CD4-positive, alpha-beta memory T cell (primary cell): ENCODE measurements at regions of chr20 and their contacts with region 1.

Region 1: DNA sequence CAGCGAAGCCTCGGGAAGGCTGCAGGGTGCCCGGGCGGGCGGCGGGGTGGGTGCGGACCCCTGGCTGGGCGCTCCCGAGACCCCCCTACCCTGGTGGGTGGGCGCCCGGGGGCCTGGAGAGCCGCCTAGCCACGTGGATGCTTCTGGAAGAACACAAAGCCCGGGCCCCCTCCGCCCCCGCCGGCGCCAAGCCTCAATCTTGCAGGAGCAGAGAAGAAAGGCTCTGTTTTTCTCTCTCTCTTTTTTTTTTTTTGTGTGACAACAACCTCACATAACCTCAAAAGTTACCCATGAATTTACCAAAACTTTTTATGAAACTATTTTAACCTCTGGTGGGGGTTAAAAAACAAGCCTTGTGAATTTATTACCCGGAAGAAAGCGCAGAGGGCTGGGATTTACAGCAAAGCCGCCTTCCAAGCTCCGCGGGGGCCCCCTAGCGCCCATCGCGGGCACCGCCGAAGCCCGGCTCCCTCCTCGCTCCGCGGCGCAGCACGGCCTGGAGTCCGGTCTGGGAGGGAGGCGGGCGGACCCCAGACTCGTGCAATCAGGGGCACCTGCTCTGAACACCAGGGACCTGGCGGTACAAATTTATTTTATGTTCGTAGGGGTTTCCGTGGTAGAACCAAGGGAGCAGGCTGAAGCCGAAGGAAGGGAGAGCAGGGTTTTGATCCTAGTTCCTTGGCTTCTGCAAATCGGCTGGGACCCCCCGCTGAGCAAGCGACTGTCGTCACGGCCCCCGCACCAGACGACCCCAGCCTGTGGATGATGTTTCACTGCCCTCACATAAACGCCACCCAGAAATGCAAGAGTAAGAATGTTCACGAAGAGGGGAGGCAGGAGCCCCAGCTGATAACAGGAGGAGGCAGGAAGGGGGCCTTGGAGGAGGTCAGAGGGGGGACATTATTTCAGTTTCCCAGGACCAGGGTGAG is 58.9 kb downstream of the ZNF831 start:
- DNase-seq: peak; percentile 75 to 79 (median 77)
- H3K4me3 ChIP-seq: peak overlapping the region in 1 of 2 donors; percentile 30
- H3K4me3 Mint-ChIP-seq: peak overlapping the region; percentile 78 to 86 (median 83)
- H3K27ac ChIP-seq: peak overlapping the region; percentile 36
- H3K27ac Mint-ChIP-seq: peak overlapping the region; percentile 54 to 93 (median 82)
- H3K4me1 ChIP-seq: peaks cover 20% of the 10 kb centered on the region
- H3K4me1 Mint-ChIP-seq: peaks cover 9 to 32% (median 19%) of the 10 kb centered on the region in 4 donors
- H3K27me3 ChIP-seq: no peaks in the 10 kb centered on the region
- H3K27me3 Mint-ChIP-seq: no peaks in the 10 kb centered on the region

Region 2: GRCh38 chr20:58870239-58871014 is 352.1 kb before region 1 on chr20:
- CTCF ChIA-PET with region 1: interaction called, 21 read pairs
- POLR2A ChIA-PET with region 1: no interaction called
- intact Hi-C with region 1: loop called (anchors 1 kb)
- DNase-seq: peak in 4 of 5 donors; percentile 42 to 60 (median 48)
- H3K4me3 ChIP-seq: no peak overlapping the region
- H3K4me3 Mint-ChIP-seq: peak overlapping the region in 1 of 8 donors; percentile 32
- H3K27ac ChIP-seq: no peak overlapping the region
- H3K27ac Mint-ChIP-seq: peak overlapping the region in 1 of 7 donors; percentile 57
- H3K4me1 ChIP-seq: no peaks in the 10 kb centered on the region
- H3K4me1 Mint-ChIP-seq: peaks cover 0 to 3% (median 0%) of the 10 kb centered on the region in 4 donors
- H3K27me3 ChIP-seq: no peaks in the 10 kb centered on the region
- H3K27me3 Mint-ChIP-seq: no peaks in the 10 kb centered on the region

Region 3: GRCh38 chr20:59137532-59137931 is 85.0 kb before region 1 on chr20:
- CTCF ChIA-PET with region 1: no interaction called
- POLR2A ChIA-PET with region 1: no interaction called
- intact Hi-C with region 1: no loop called
- DNase-seq: no peak
- H3K4me3 ChIP-seq: no peak overlapping the region
- H3K4me3 Mint-ChIP-seq: no peak overlapping the region
- H3K27ac ChIP-seq: no peak overlapping the region
- H3K27ac Mint-ChIP-seq: no peak overlapping the region
- H3K4me1 ChIP-seq: peaks cover 16% of the 10 kb centered on the region
- H3K4me1 Mint-ChIP-seq: peaks cover 11 to 30% (median 18%) of the 10 kb centered on the region in 4 donors
- H3K27me3 ChIP-seq: no peaks in the 10 kb centered on the region
- H3K27me3 Mint-ChIP-seq: peaks cover 0 to 1% of the 10 kb centered on the region in 2 donors

Region 4: GRCh38 chr20:59149651-59150504 is 72.6 kb before region 1 on chr20:
- CTCF ChIA-PET with region 1: no interaction called
- POLR2A ChIA-PET with region 1: interaction called, 6 read pairs
- intact Hi-C with region 1: loop called (anchors 5 kb)
- DNase-seq: peak; percentile 88 to 93 (median 91)
- H3K4me3 ChIP-seq: peak overlapping the region in 1 of 2 donors; percentile 2
- H3K4me3 Mint-ChIP-seq: peak overlapping the region; percentile 73 to 91 (median 80)
- H3K27ac ChIP-seq: peak overlapping the region; percentile 93
- H3K27ac Mint-ChIP-seq: peak overlapping the region; percentile 96 to 100 (median 100)
- H3K4me1 ChIP-seq: peaks cover 92% of the 10 kb centered on the region
- H3K4me1 Mint-ChIP-seq: peaks cover 72 to 97% (median 88%) of the 10 kb centered on the region in 4 donors
- H3K27me3 ChIP-seq: no peaks in the 10 kb centered on the region
- H3K27me3 Mint-ChIP-seq: no peaks in the 10 kb centered on the region

Region 5: GRCh38 chr20:59159493-59160376 is 62.8 kb before region 1 on chr20:
- CTCF ChIA-PET with region 1: no interaction called
- POLR2A ChIA-PET with region 1: interaction called, 11 read pairs
- intact Hi-C with region 1: no loop called
- DNase-seq: peak; percentile 85 to 94 (median 89)
- H3K4me3 ChIP-seq: peak overlapping the region; percentile 48 to 76
- H3K4me3 Mint-ChIP-seq: peak overlapping the region; percentile 83 to 96 (median 89)
- H3K27ac ChIP-seq: peak overlapping the region; percentile 97
- H3K27ac Mint-ChIP-seq: peak overlapping the region; percentile 97 to 99 (median 99)
- H3K4me1 ChIP-seq: peaks cover 85% of the 10 kb centered on the region
- H3K4me1 Mint-ChIP-seq: peaks cover 67 to 98% (median 81%) of the 10 kb centered on the region in 4 donors
- H3K27me3 ChIP-seq: no peaks in the 10 kb centered on the region
- H3K27me3 Mint-ChIP-seq: no peaks in the 10 kb centered on the region

Region 6: GRCh38 chr20:59403261-59403961 is 180.9 kb after region 1 on chr20:
- CTCF ChIA-PET with region 1: interaction called, 8 read pairs
- POLR2A ChIA-PET with region 1: no interaction called
- intact Hi-C with region 1: loop called (anchors 2 kb)
- DNase-seq: peak; percentile 50 to 75 (median 62)
- H3K4me3 ChIP-seq: peak overlapping the region in 1 of 2 donors; percentile 33
- H3K4me3 Mint-ChIP-seq: peak overlapping the region in 4 of 8 donors; percentile 49 to 77 (median 76)
- H3K27ac ChIP-seq: no peak overlapping the region
- H3K27ac Mint-ChIP-seq: peak overlapping the region in 2 of 7 donors; percentile 49 to 55
- H3K4me1 ChIP-seq: peaks cover 32% of the 10 kb centered on the region
- H3K4me1 Mint-ChIP-seq: peaks cover 0 to 4% (median under 1%) of the 10 kb centered on the region in 4 donors
- H3K27me3 ChIP-seq: no peaks in the 10 kb centered on the region
- H3K27me3 Mint-ChIP-seq: peaks cover 17 to 22% of the 10 kb centered on the region in 2 donors

Region 7: GRCh38 chr20:59495894-59496510 is 273.5 kb after region 1 on chr20:
- CTCF ChIA-PET with region 1: interaction called, 3 read pairs
- POLR2A ChIA-PET with region 1: no interaction called
- intact Hi-C with region 1: loop called (anchors 5 kb)
- DNase-seq: peak; percentile 50 to 59 (median 53)
- H3K4me3 ChIP-seq: no peak overlapping the region
- H3K4me3 Mint-ChIP-seq: no peak overlapping the region
- H3K27ac ChIP-seq: no peak overlapping the region
- H3K27ac Mint-ChIP-seq: no peak overlapping the region
- H3K4me1 ChIP-seq: no peaks in the 10 kb centered on the region
- H3K4me1 Mint-ChIP-seq: peaks cover 0 to 2% (median 0%) of the 10 kb centered on the region in 4 donors
- H3K27me3 ChIP-seq: peaks cover 6% of the 10 kb centered on the region
- H3K27me3 Mint-ChIP-seq: peaks cover 14 to 17% of the 10 kb centered on the region in 2 donors